B cell (primary cell): ENCODE measurements at regions of chr10 and their contacts with region 1.

Region 1: GRCh38 chr10:91163269-91163868 is 57.1 kb upstream of the PCGF5 start:
- DNase-seq: peak; percentile 92
- ATAC-seq: peak; percentile 48
- H3K4me3 ChIP-seq: peak overlapping the region; percentile 34 to 84 (median 71)
- H3K4me3 Mint-ChIP-seq: peak overlapping the region; percentile 94
- H3K27ac ChIP-seq: peak overlapping the region; percentile 85 to 90
- H3K27ac Mint-ChIP-seq: peak overlapping the region; percentile 97
- H3K4me1 ChIP-seq: peaks cover 14 to 15% of the 10 kb centered on the region in 2 donors
- H3K4me1 Mint-ChIP-seq: peaks cover 49% of the 10 kb centered on the region
- H3K27me3 ChIP-seq: no peaks in the 10 kb centered on the region
- H3K27me3 Mint-ChIP-seq: no peaks in the 10 kb centered on the region
- CTCF ChIP-seq: peak; percentile 34

Region 2: GRCh38 chr10:89301721-89302445 is 1861.5 kb before region 1 on chr10 and contains the start of gene IFIT2:
- CTCF ChIA-PET with region 1: no interaction called
- POLR2A ChIA-PET with region 1: no interaction called
- intact Hi-C with region 1: loop called (anchors 5 kb)
- DNase-seq: peak; percentile 87
- ATAC-seq: peak; percentile 95
- H3K4me3 ChIP-seq: peak within 1 kb of the TSS; percentile 57 to 92 (median 76)
- H3K4me3 Mint-ChIP-seq: peak within 1 kb of the TSS; percentile 94
- H3K27ac ChIP-seq: peak within 1 kb of the TSS; percentile 93 to 94
- H3K27ac Mint-ChIP-seq: peak within 1 kb of the TSS; percentile 97
- H3K4me1 ChIP-seq: peaks cover 37% of the 10 kb centered on the region in 2 donors
- H3K4me1 Mint-ChIP-seq: peaks cover 54% of the 10 kb centered on the region
- H3K27me3 ChIP-seq: no peaks in the 10 kb centered on the region
- H3K27me3 Mint-ChIP-seq: no peaks in the 10 kb centered on the region
- CTCF ChIP-seq: no peak
- total RNA-seq, gene IFIT2: 12.4 and 13.4 TPM in 2 replicates

Region 3: DNA sequence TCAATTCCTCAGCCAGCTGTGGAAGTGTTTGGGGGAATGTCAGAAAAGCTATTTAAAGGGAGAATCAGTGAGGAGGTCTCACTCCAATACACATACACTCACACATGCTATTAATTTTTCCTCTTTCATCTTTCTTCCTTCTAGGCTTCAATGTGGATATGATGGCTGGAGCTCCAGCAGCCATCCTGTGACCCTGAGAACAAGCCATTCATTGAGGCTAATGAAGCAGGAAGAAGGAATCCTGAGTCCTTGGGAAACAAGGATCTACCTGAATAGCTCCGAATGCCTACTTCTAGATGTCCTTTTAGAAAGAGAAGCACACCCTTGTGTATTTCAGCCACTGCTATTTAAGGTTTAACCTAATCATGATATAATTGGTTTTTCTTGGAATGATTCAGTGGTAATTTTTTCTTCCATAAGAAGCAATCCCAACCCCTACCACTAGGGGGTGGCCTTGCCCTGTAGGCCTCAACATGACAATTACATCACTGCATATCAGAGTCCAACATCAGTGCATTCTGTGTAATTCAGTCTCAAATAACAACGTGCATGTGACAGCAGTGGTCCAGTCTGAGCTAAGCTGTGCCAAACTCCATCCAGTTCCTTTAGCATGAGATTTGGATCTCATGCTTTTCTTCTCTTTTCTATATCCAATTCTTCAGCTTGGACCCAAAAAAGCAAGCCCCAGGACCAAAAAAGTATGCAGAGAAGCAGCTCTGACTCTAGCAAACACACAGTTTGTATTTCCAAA is 157.2 kb before region 1 on chr10:
- CTCF ChIA-PET with region 1: interaction called, 8 read pairs
- POLR2A ChIA-PET with region 1: interaction called, 3 read pairs
- intact Hi-C with region 1: loop called (anchors 1 kb)
- DNase-seq: peak; percentile 79
- ATAC-seq: peak; percentile 89
- H3K4me3 ChIP-seq: peak overlapping the region in 3 of 5 experiments; percentile 2 to 47 (median 15)
- H3K4me3 Mint-ChIP-seq: peak overlapping the region; percentile 78
- H3K27ac ChIP-seq: peak overlapping the region; percentile 74 to 79
- H3K27ac Mint-ChIP-seq: peak overlapping the region; percentile 87
- H3K4me1 ChIP-seq: peaks cover 35 to 38% of the 10 kb centered on the region in 2 donors
- H3K4me1 Mint-ChIP-seq: peaks cover 40% of the 10 kb centered on the region
- H3K27me3 ChIP-seq: no peaks in the 10 kb centered on the region
- H3K27me3 Mint-ChIP-seq: no peaks in the 10 kb centered on the region
- CTCF ChIP-seq: peak; percentile 98

Region 4: DNA sequence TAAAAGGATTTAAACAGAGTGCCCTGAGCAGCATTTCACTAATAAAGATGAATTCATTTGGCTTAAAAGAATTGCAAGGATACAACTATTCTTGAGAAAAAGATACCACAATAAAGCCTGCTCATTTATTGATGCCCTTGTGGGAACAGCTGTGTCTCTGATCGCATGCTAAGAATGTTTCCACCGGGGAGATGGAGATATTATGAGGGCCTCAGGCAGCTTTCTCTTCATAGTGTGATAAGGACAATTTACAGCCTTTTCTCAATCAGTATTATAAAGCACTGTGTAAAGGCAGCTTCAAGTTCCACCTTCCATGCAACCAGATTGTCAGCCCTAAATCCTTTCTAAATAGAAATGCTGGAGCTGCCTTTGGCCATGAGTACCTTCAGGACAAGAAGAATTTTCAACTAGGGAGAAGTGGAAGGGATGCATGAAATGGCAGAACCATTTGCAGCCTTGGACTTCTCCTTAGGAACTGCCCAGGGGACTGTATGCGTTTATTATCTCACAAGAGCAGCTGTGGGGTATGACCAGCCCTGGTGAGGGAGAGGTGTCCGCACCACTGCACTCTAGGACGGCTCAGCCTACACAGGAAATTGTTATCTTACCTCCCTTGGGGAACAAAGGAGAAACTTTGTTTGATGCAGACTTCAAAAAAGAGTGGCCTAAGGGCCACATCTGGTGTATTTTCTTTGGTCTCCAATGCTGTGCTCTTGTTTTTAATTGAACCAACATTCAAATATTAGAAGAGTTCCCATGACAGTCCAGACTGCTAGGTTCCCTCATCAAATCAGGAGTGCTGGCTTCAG is 59.8 kb before region 1 on chr10:
- CTCF ChIA-PET with region 1: no interaction called
- POLR2A ChIA-PET with region 1: interaction called, 4 read pairs
- intact Hi-C with region 1: loop called (anchors 5 kb)
- DNase-seq: peak; percentile 31
- ATAC-seq: peak; percentile 84
- H3K4me3 ChIP-seq: peak overlapping the region in 1 of 5 experiments; percentile 16
- H3K4me3 Mint-ChIP-seq: peak overlapping the region; percentile 70
- H3K27ac ChIP-seq: peak overlapping the region in 1 of 2 donors; percentile 43
- H3K27ac Mint-ChIP-seq: peak overlapping the region; percentile 76
- H3K4me1 ChIP-seq: peaks cover 22 to 28% of the 10 kb centered on the region in 2 donors
- H3K4me1 Mint-ChIP-seq: peaks cover 35% of the 10 kb centered on the region
- H3K27me3 ChIP-seq: no peaks in the 10 kb centered on the region
- H3K27me3 Mint-ChIP-seq: no peaks in the 10 kb centered on the region
- CTCF ChIP-seq: no peak

Region 5: DNA sequence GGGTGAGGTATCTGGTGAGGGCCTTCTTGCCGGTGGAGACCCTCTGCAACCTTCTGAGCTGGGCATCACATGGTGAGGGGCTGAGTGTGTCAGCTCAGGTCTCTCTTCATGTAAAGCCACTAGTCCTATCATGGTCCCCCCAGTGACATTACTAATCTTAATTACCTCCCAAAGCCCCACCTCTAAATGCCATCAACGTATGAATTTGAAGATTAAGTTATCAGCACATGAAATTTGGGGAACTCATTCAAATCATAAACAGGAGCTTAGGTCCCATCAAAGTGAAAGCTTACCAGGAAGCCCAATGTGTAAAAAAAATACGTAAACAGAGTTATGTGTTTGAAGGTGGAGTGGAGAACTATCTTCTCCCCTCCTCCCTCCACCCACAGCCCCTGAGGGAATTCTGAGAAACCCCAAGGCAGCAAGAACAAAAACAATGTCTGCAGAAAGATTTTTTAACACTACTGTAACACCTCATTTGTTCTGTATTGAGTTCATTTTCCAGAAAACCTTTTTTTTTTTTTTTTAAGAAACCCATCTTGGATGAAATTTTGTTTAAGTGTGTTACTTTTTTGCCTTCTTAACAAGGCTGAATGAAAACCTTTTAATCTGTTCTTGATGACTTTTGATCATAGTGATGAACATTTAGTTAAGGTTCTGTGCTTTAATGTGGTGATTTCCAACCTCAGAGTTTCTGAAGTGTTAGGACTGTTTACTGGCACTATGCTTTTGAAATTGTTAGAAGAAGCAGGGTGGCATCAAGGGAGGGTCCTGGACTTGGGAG is 38.0 kb after region 1 on chr10:
- CTCF ChIA-PET with region 1: interaction called, 7 read pairs
- POLR2A ChIA-PET with region 1: interaction called, 30 read pairs
- intact Hi-C with region 1: loop called (anchors 1 kb)
- DNase-seq: peak; percentile 86
- ATAC-seq: peak; percentile 85
- H3K4me3 ChIP-seq: peak overlapping the region; percentile 1 to 60 (median 18)
- H3K4me3 Mint-ChIP-seq: peak overlapping the region; percentile 79
- H3K27ac ChIP-seq: peak overlapping the region; percentile 73 to 77
- H3K27ac Mint-ChIP-seq: peak overlapping the region; percentile 76
- H3K4me1 ChIP-seq: peaks cover 78 to 83% of the 10 kb centered on the region in 2 donors
- H3K4me1 Mint-ChIP-seq: peaks cover 86% of the 10 kb centered on the region
- H3K27me3 ChIP-seq: no peaks in the 10 kb centered on the region
- H3K27me3 Mint-ChIP-seq: no peaks in the 10 kb centered on the region
- CTCF ChIP-seq: no peak

Region 6: GRCh38 chr10:91923371-91924211 is 760.2 kb after region 1 on chr10 and contains the start of gene BTAF1:
- CTCF ChIA-PET with region 1: no interaction called
- POLR2A ChIA-PET with region 1: no interaction called
- intact Hi-C with region 1: loop called (anchors 2 kb)
- DNase-seq: peak; percentile 96
- ATAC-seq: peak; percentile 93
- H3K4me3 ChIP-seq: peak within 1 kb of the TSS; percentile 88 to 98 (median 93)
- H3K4me3 Mint-ChIP-seq: peak within 1 kb of the TSS; percentile 86
- H3K27ac ChIP-seq: peak within 1 kb of the TSS; percentile 93 to 99
- H3K27ac Mint-ChIP-seq: peak within 1 kb of the TSS; percentile 100
- H3K4me1 ChIP-seq: peaks cover 18 to 20% of the 10 kb centered on the region in 2 donors
- H3K4me1 Mint-ChIP-seq: peaks cover 39% of the 10 kb centered on the region
- H3K27me3 ChIP-seq: peaks cover 0 to 4% (median 2%) of the 10 kb centered on the region in 4 experiments
- H3K27me3 Mint-ChIP-seq: peaks cover 3% of the 10 kb centered on the region
- CTCF ChIP-seq: no peak
- total RNA-seq, gene BTAF1: 78.1 and 81.7 TPM in 2 replicates